Adrenal gland (tissue), 19 donors: ENCODE measurements at regions of chr20 and their contacts with region 1.

Region 1: GRCh38 chr20:568097-568652 is 24.6 kb upstream of the CSNK2A1 start:
- DNase-seq: peak in 1 of 7 donors; percentile 15
- H3K4me3 ChIP-seq: no peak overlapping the region
- H3K27ac ChIP-seq: no peak overlapping the region
- H3K4me1 ChIP-seq: no peaks in the 10 kb centered on the region
- H3K27me3 ChIP-seq: peaks cover 13% of the 10 kb centered on the region
- CTCF ChIP-seq: no peak
- POLR2A ChIP-seq: no peak

Region 2: DNA sequence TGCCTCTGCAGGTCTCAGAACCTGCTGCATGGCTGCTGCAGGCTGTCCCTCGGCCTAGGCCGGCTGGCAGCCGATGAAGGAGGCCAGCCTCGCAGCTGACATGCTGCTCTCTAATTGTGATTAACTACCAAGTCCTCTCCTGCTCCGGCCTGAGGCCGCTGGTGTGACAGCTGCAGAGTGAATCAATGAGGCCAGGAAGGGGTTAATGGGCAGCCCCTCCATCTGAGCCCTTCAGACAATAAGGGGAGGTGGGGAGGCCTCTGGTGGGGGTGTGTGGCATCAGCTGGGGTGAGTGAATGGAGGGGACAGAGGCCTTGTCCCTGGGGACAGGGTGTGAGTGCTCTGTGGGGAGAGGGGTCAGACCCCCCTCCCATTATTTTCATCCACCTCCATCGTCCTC is 165.7 kb after region 1 on chr20:
- intact Hi-C with region 1: loop called (anchors 5 kb)
- DNase-seq: no peak
- H3K4me3 ChIP-seq: no peak overlapping the region
- H3K27ac ChIP-seq: no peak overlapping the region
- H3K4me1 ChIP-seq: no peaks in the 10 kb centered on the region
- H3K27me3 ChIP-seq: peaks cover 4% of the 10 kb centered on the region
- CTCF ChIP-seq: no peak
- POLR2A ChIP-seq: no peak